ENCODE measurements at regions of chr1 and their contacts with region 1.

Region 1: GRCh38 chr1:150765296-150765976 is at the start of gene CTSS:
- DNase-seq: peak in 4 of 5 donors; percentile 34 to 46 (median 38)
- H3K4me3 ChIP-seq: peak within 1 kb of the TSS; percentile 55 to 71
- H3K4me3 Mint-ChIP-seq: peak within 1 kb of the TSS; percentile 89 to 98 (median 93)
- H3K27ac ChIP-seq: peak within 1 kb of the TSS; percentile 51
- H3K27ac Mint-ChIP-seq: peak within 1 kb of the TSS; percentile 87 to 98 (median 95)
- H3K4me1 ChIP-seq: peaks cover 43% of the 10 kb centered on the region
- H3K4me1 Mint-ChIP-seq: peaks cover 29 to 58% (median 42%) of the 10 kb centered on the region in 4 donors
- H3K27me3 ChIP-seq: no peaks in the 10 kb centered on the region
- H3K27me3 Mint-ChIP-seq: no peaks in the 10 kb centered on the region
- total RNA-seq, gene CTSS: 119 TPM

Region 2: GRCh38 chr1:150302338-150302737 is 463.1 kb before region 1 on chr1:
- CTCF ChIA-PET with region 1: no interaction called
- POLR2A ChIA-PET with region 1: no interaction called
- intact Hi-C with region 1: no loop called
- DNase-seq: no peak
- H3K4me3 ChIP-seq: no peak overlapping the region
- H3K4me3 Mint-ChIP-seq: no peak overlapping the region
- H3K27ac ChIP-seq: no peak overlapping the region
- H3K27ac Mint-ChIP-seq: peak overlapping the region in 4 of 7 donors; percentile 10 to 70 (median 15)
- H3K4me1 ChIP-seq: no peaks in the 10 kb centered on the region
- H3K4me1 Mint-ChIP-seq: peaks cover 0 to 8% (median 2%) of the 10 kb centered on the region in 4 donors
- H3K27me3 ChIP-seq: no peaks in the 10 kb centered on the region
- H3K27me3 Mint-ChIP-seq: no peaks in the 10 kb centered on the region

Region 3: DNA sequence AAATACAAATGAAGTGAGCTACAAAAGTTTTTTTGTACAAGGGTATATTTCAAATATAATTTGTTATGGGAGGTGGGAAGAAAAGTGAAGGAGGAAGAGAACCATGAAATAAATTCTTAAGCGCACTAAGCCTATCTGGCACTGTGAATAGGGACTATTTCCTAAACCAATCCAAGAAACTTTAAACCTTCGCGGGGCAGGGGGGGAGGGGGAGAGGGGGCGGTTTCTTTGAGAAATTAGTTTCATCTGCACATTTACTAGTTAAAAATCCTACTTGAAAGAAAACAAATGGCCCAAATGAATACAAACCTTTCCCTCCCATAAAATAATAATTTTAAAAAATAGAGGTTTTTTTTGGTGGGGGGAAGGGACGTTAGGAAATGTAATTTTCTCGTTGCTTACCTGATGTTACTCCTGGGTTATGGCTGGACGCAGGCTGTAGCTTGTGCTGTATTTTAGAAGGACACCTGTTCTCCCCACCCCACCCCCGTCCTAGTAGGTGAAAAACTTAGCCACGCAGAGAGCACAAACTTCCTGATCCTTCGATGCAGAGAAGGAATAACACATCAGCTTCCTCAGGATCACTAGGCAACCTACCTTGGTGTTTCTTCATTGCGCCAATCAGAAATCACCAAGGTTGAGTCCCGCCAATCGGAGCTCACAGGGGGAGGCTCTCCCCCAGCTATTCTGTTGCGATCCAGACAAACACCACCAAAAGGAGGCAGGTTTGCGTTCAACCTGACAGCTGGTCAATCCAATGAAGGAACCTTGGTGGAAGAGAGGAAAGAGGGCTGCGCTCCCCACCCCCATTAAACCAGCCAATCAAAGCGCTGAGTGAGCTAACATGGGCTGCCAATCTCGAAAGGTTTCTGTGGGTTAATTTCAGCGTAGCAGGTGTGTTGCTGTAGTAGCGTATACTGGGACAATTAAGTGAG is 68.6 kb before region 1 on chr1 and contains the start of gene GOLPH3L:
- CTCF ChIA-PET with region 1: no interaction called
- POLR2A ChIA-PET with region 1: interaction called, 9 read pairs
- intact Hi-C with region 1: loop called (anchors 2 kb)
- DNase-seq: peak; percentile 90 to 97 (median 93)
- H3K4me3 ChIP-seq: peak within 1 kb of the TSS; percentile 86 to 92
- H3K4me3 Mint-ChIP-seq: peak within 1 kb of the TSS; percentile 94 to 100 (median 98)
- H3K27ac ChIP-seq: peak within 1 kb of the TSS; percentile 70
- H3K27ac Mint-ChIP-seq: peak within 1 kb of the TSS; percentile 88 to 100 (median 96)
- H3K4me1 ChIP-seq: peaks cover 27% of the 10 kb centered on the region
- H3K4me1 Mint-ChIP-seq: peaks cover 17 to 40% (median 27%) of the 10 kb centered on the region in 4 donors
- H3K27me3 ChIP-seq: no peaks in the 10 kb centered on the region
- H3K27me3 Mint-ChIP-seq: peaks cover 1 to 3% of the 10 kb centered on the region in 2 donors
- total RNA-seq, gene GOLPH3L: 29.7 to 30.4 TPM

Region 4: DNA sequence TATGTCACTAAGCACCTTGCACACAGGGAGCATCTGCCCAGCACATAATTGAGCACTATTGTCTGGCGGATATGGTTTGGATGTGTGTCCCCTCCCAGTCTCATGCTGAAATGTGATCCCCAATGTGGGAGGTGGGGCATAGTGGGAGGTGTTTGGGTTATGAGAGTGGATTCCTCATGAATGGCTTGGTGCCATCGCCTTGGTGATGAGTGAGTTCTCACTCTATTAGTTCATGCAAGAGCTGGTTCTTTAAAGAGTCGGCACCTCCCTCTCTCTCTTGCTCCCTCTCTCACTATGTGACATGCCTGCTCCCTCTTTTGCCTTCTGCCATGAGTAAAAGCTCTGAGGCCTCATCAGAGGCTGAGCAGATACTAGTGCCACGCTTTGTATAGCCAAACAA is 33.1 kb after region 1 on chr1:
- CTCF ChIA-PET with region 1: no interaction called
- POLR2A ChIA-PET with region 1: no interaction called
- intact Hi-C with region 1: no loop called
- DNase-seq: no peak
- H3K4me3 ChIP-seq: no peak overlapping the region
- H3K4me3 Mint-ChIP-seq: no peak overlapping the region
- H3K27ac ChIP-seq: no peak overlapping the region
- H3K27ac Mint-ChIP-seq: no peak overlapping the region
- H3K4me1 ChIP-seq: no peaks in the 10 kb centered on the region
- H3K4me1 Mint-ChIP-seq: no peaks in the 10 kb centered on the region
- H3K27me3 ChIP-seq: no peaks in the 10 kb centered on the region
- H3K27me3 Mint-ChIP-seq: no peaks in the 10 kb centered on the region